Dendritic cell treated with granulocyte-macrophage colony-stimulating factor and Interleukin-4, amounts not matched to agents 40 ng/mL and 50 ng/mL, for 4 days (primary cell): ENCODE measurements at regions of chr9 and their contacts with region 1.

Region 1: DNA sequence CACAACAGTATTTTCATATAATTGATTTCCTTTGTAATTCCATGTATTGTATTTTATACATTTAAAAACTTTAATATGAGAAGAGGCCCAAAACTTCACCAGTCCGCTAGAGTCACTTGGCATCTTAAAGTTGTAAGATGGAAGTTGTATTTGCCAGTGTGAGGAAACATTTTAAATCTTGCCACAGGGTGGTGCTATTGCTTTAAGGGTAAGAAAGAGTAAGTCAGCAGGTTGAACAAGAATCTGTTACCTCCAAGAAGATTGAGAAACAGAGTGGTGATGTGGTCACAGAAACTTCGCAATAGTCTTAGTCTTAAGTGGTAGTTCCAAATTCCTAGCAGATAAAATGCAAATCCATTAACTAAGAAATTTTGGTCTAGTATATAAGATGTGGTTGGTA is 39.8 kb upstream of the RANBP6 start:
- H3K4me3 Mint-ChIP-seq: no peak overlapping the region
- H3K27ac Mint-ChIP-seq: no peak overlapping the region
- H3K4me1 Mint-ChIP-seq: no peaks in the 10 kb centered on the region
- H3K27me3 Mint-ChIP-seq: peaks cover 6% of the 10 kb centered on the region

Region 2: DNA sequence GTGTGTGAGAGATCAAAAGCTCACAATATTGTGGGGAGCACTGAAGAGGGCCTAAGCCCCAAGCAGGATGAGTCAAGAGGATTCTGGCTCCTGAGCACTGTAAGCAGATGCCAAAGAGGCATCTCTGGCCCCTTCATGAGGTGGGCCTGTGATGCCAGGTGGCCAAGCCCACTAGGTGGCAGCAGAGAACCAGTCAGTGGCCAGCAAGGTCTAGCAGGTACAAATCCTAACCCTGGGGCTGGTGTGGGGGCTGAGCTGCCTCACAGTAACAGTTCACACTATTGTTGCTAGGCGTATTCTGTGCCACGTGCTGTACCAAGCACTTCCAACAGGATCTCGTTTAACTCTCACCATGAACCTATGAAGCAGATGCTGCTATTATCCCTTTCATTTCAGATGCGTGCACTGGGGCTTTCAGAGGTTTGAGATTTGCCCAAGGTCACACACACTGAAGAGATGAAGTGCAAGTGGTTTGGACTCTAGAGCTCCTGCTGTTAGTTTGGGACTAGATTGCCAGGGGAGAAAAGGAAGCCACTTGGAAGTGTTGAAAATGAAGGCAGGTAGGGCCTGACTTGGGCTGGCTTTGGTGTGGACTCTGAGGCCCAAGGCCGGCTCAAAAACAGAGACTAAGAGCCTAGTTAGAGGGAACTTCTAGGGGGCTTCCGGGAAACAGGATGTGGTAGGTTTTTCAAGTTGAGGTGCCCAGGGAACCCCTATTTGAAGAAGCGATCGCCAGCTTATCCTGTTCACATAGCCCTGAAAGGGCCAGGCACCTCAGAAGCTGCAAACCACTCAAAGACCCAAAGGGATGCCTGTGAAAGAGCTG is 168.9 kb before region 1 on chr9:
- intact Hi-C with region 1: loop called (anchors 2 kb)
- H3K4me3 Mint-ChIP-seq: no peak overlapping the region
- H3K27ac Mint-ChIP-seq: no peak overlapping the region
- H3K4me1 Mint-ChIP-seq: no peaks in the 10 kb centered on the region
- H3K27me3 Mint-ChIP-seq: no peaks in the 10 kb centered on the region

Region 3: GRCh38 chr9:5953743-5954707 is 101.2 kb before region 1 on chr9:
- intact Hi-C with region 1: no loop called
- H3K4me3 Mint-ChIP-seq: no peak overlapping the region
- H3K27ac Mint-ChIP-seq: no peak overlapping the region
- H3K4me1 Mint-ChIP-seq: peaks cover 10% of the 10 kb centered on the region
- H3K27me3 Mint-ChIP-seq: no peaks in the 10 kb centered on the region

Region 4: DNA sequence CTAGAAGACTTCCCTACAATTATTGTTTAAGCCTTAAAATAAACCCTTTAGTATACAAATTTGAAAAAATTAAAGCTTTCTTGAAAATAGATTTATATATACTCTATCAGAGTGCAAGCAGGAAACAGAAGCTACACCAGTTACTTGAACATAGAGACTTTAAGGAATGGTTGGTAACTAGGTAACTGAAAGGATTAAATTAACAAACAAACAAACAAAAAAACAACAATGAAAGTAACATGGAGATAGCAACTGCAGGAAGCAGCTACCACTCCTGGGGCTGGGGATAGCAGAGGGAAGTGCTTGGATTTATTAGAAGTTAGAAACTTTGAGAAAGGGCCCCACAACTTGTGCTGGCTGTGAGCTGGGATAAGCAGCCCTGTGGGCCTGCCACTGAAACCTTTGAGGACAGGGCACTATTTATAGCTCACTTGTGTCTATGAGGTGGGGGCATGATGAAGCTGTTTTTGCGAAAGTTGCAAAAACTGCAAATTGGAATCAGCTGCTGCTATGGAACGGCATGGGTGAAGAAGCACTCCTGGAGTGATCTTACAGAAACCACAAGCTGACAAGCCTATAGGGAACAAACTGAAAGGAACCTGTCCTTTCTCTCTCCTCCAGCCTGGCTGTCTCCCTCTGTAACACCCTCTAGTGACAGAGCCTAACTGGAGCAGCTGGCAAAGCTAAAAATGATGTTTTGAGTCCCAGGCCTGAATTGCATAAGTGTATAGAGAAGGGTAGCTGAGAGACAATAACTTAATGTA is 51.5 kb after region 1 on chr9:
- intact Hi-C with region 1: loop called (anchors 5 kb)
- H3K4me3 Mint-ChIP-seq: no peak overlapping the region
- H3K27ac Mint-ChIP-seq: no peak overlapping the region
- H3K4me1 Mint-ChIP-seq: no peaks in the 10 kb centered on the region
- H3K27me3 Mint-ChIP-seq: no peaks in the 10 kb centered on the region

Region 5: GRCh38 chr9:6566409-6567139 is 511.4 kb after region 1 on chr9:
- intact Hi-C with region 1: loop called (anchors 5 kb)
- H3K4me3 Mint-ChIP-seq: no peak overlapping the region
- H3K27ac Mint-ChIP-seq: no peak overlapping the region
- H3K4me1 Mint-ChIP-seq: peaks cover 39% of the 10 kb centered on the region
- H3K27me3 Mint-ChIP-seq: peaks cover 3% of the 10 kb centered on the region